HepG2 (cell line): ENCODE measurements at regions of chr5 and their contacts with region 1.

Region 1: DNA sequence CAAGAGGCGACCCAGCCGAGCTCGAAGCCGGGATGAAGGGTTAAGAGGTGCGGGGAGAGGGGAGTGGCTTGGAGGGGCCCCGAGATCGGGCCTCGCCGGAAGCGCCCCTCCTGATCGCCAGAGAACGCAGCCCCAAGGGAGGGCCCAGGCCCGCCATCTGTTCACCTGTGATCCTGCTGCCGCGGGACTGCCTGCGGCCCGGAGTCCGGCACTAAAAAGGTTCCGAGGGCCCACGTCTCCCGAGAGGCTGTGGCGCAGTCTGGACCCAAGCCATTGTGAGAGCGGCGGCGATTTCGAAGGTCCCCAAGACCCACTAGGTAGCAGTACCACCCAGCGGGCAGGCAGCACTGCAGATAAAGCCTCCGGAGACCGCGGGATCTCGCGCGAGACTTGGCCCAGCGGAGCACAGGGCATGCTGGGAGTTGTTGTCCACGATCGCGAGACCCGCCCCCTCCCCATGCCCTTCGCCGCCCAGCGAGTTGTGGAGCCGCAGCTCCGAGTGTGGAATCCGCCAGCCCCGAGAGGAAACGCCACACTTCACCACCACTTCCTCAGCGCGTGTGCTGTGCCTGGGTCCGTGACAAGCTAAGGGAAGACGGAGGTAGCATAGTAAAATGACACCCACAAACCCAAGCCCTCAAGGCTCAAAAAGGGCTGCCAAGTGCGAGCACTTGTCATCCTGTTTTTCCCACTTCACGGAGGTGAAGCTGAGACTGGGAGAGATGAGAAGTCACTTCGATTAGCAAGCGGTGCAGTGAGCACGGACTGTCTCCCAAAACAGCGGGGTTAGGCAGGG is at the start of gene KIAA1191:
- DNase-seq: peak; percentile 86
- ATAC-seq: peak; percentile 98
- H3K4me3 ChIP-seq: peak within 1 kb of the TSS; percentile 76 to 91 (median 87)
- H3K27ac ChIP-seq: peak within 1 kb of the TSS; percentile 60
- H3K4me1 ChIP-seq: peaks cover 45% of the 10 kb centered on the region
- H3K27me3 ChIP-seq: peaks cover 3 to 6% of the 10 kb centered on the region in 2 experiments; a peak in 4 of 5 replicates
- CTCF ChIP-seq: peak; percentile 69
- EP300 ChIP-seq: peak in 1 of 2 experiments; percentile 49; a peak in 2 of 4 replicates
- POLR2A ChIP-seq: peak; percentile 98 to 100
- RAD21 ChIP-seq: peak; percentile 71
- total RNA-seq, gene KIAA1191: 63.6 and 81.6 TPM in 2 replicates

Region 2: DNA sequence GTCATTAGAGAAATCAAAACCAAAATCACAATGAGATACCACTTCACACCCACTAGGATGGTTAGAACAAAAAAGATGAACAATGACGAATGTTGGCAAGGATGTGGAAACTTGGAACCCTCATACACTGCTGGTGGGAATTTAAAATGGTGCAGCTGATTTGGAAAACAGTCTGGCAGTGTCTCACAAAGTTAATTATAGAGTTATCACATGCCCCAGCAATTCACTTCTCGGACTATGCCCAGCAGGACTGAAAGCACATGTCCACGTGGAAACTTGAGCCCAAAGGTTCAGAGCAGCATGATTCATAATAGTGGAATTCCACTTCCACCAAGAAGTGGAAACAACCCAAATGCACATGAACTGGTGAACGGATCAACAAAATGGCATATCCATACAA is 788.7 kb before region 1 on chr5:
- CTCF ChIA-PET with region 1: no interaction called
- POLR2A ChIA-PET with region 1: no interaction called
- in situ Hi-C with region 1: no loop called
- intact Hi-C with region 1: no loop called
- DNase-seq: peak; percentile 9
- ATAC-seq: no peak; the same call in 2 of the 3 replicates
- H3K4me3 ChIP-seq: no peak overlapping the region
- H3K27ac ChIP-seq: no peak overlapping the region
- H3K4me1 ChIP-seq: no peaks in the 10 kb centered on the region
- H3K27me3 ChIP-seq: peaks cover 3 to 41% of the 10 kb centered on the region in 2 experiments; a peak in 4 of 5 replicates
- CTCF ChIP-seq: no peak
- EP300 ChIP-seq: no peak; a peak in 1 of 4 replicates
- POLR2A ChIP-seq: no peak
- RAD21 ChIP-seq: no peak

Region 3: DNA sequence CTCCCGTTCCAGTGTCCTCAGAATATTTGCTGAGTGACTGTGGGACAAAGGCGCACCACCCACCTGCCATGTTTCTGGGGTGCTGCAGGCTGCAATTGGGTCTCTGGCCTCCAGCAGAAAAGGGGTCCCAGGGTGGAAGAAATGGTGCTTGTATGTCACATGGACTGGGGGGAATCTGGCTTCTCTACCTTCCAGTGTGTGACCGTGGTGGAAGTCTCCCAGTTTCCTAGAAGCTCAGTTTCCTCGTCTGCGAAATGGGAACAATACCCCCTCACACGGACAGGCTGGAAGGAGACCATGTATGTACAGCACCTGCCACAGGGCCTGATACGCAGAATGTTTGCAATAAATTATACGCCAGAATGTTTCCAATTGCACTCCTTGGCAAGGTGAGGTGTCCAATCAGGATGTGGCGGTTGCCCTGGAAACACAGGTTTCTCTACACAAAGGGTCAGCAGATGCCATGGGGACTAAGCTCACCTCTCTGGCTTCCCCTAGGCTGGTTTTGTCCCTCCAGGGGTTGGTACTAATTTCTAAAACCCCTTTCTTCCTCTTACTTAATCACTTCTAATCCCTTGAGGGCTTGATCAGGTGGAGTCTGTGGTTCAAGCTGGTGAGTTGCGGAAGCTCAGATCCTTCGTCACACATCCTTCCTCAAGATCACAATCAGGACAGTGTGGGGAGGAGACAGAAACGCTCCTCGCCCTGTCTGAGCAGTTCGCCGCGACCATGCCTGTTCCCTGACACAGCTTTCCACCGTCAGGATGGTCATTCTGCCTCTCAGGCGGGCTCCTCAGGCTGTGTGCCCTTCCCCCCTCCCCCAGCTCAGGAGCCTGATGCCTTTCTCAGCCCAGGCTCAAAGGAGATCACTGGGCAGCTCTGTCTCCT is 466.2 kb before region 1 on chr5:
- CTCF ChIA-PET with region 1: no interaction called
- POLR2A ChIA-PET with region 1: no interaction called
- in situ Hi-C with region 1: no loop called
- intact Hi-C with region 1: no loop called
- DNase-seq: no peak
- ATAC-seq: no peak
- H3K4me3 ChIP-seq: no peak overlapping the region
- H3K27ac ChIP-seq: no peak overlapping the region
- H3K4me1 ChIP-seq: peaks cover 2% of the 10 kb centered on the region
- H3K27me3 ChIP-seq: no peaks in the 10 kb centered on the region
- CTCF ChIP-seq: no peak
- EP300 ChIP-seq: no peak
- POLR2A ChIP-seq: no peak
- RAD21 ChIP-seq: no peak

Region 4: DNA sequence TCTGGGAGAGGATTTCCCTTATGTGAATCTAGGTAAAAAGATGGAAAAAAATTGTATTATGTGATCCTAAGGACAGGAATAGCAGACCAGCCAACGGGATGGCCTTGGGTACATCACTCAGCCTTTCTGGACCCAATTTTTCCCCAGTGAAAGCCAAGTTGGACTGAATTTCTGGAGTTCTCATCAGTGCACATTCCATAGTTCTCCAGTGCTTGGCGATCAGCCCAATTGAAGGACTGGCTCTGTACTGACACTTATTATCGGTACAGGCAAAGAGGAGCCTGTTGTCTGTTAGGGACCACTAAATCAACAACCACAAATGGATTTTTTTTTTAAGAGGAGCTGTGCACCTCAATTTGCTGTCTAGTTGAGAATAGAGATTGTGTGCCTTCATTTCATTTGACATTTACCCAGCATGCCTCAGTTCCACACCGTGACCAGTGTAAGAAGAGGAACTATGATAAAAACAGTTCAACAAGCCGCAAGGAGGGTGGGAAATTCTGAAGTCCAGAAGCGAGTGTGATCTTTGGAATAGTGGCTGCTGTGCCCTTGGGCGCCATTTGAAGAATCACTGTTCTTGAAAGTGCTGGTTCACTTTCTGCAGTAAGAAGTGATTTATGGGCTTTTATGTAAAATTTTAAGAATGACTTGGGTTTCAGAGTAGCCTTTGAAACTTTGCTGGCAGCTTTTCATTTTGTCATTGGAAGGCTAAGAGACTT is 11.6 kb after region 1 on chr5:
- CTCF ChIA-PET with region 1: no interaction called
- POLR2A ChIA-PET with region 1: interaction called, 37 read pairs
- in situ Hi-C with region 1: no loop called
- intact Hi-C with region 1: loop called (anchors 1 kb)
- DNase-seq: no peak
- ATAC-seq: no peak
- H3K4me3 ChIP-seq: no peak overlapping the region
- H3K27ac ChIP-seq: no peak overlapping the region
- H3K4me1 ChIP-seq: peaks cover 37% of the 10 kb centered on the region
- H3K27me3 ChIP-seq: no peaks in the 10 kb centered on the region
- CTCF ChIP-seq: no peak
- EP300 ChIP-seq: no peak
- POLR2A ChIP-seq: no peak
- RAD21 ChIP-seq: no peak

Region 5: GRCh38 chr5:176388444-176389134 is 27.0 kb after region 1 on chr5 and contains the starts of genes HIGD2A and NOP16:
- CTCF ChIA-PET with region 1: no interaction called
- POLR2A ChIA-PET with region 1: interaction called, 31 read pairs
- in situ Hi-C with region 1: no loop called
- intact Hi-C with region 1: no loop called
- DNase-seq: peak; percentile 98
- ATAC-seq: peak; percentile 90
- H3K4me3 ChIP-seq: peak within 1 kb of the TSS; percentile 71 to 93 (median 92)
- H3K27ac ChIP-seq: peak within 1 kb of the TSS; percentile 99
- H3K4me1 ChIP-seq: peaks cover 31% of the 10 kb centered on the region
- H3K27me3 ChIP-seq: no peaks in the 10 kb centered on the region; a peak in 1 of 5 replicates
- CTCF ChIP-seq: no peak
- EP300 ChIP-seq: no peak
- POLR2A ChIP-seq: peak; percentile 78 to 91
- RAD21 ChIP-seq: no peak
- total RNA-seq, gene HIGD2A: 89.2 and 95.7 TPM in 2 replicates
- total RNA-seq, gene NOP16: 48.4 and 58.4 TPM in 2 replicates

Region 6: DNA sequence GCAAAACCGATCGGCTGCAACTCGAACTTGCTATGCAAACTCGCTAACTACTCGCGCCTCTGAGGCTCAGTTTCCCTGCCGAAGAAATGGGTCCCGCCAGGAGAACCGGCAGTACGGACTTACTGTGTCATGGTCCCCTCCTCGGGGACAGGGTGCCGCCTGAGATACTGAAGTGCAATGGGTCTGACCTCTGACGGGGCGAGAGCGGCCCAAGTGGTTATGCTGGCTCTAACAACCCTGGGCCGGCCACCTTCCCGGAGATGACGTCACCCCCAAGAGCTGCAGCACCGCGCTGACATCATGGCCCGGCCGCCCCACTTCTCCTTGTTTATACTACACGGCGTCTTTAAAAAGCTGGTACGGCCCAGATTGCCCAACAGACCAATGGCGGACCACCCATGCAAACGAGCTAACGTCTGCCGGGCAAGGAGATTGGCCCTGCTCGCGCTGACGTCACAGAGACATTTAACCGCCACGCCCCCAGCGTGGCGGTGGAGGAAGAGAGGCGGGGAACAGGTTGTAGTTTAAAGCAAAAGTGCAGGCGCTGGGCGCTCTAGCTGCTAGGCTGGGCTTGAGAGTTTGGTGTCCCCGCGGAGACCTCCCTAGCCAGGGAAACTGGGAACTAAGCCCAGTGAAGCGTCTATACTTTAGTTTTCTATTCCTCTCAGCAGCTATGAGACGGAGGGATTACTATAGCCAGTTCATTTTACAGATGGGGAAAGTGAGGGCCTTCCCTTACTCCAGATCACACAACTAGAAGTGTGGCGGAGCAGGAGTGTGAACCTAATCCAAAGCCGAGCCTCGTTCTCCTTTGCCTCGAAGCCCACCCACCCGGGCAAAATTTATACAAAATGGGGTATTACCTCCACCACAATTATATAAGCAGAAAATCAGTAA is 176.2 kb after region 1 on chr5:
- CTCF ChIA-PET with region 1: no interaction called
- POLR2A ChIA-PET with region 1: interaction called, 11 read pairs
- in situ Hi-C with region 1: no loop called
- intact Hi-C with region 1: no loop called
- DNase-seq: peak; percentile 98
- ATAC-seq: peak; percentile 67
- H3K4me3 ChIP-seq: peak overlapping the region; percentile 90 to 98 (median 97)
- H3K27ac ChIP-seq: peak overlapping the region; percentile 95
- H3K4me1 ChIP-seq: peaks cover 69% of the 10 kb centered on the region
- H3K27me3 ChIP-seq: no peaks in the 10 kb centered on the region; a peak in 1 of 5 replicates
- CTCF ChIP-seq: no peak
- EP300 ChIP-seq: 0 out of 4 replicates have a peak, but pooled peaks of 1 of the 2 experiments have one; percentile 20
- POLR2A ChIP-seq: peak in 1 of 2 experiments; percentile 74; a peak in 2 of 4 replicates
- RAD21 ChIP-seq: 0 out of 2 replicates have a peak, but pooled peaks have one; percentile 6